ENCODE measurements at regions of chr7 and their contacts with region 1.

Region 1: DNA sequence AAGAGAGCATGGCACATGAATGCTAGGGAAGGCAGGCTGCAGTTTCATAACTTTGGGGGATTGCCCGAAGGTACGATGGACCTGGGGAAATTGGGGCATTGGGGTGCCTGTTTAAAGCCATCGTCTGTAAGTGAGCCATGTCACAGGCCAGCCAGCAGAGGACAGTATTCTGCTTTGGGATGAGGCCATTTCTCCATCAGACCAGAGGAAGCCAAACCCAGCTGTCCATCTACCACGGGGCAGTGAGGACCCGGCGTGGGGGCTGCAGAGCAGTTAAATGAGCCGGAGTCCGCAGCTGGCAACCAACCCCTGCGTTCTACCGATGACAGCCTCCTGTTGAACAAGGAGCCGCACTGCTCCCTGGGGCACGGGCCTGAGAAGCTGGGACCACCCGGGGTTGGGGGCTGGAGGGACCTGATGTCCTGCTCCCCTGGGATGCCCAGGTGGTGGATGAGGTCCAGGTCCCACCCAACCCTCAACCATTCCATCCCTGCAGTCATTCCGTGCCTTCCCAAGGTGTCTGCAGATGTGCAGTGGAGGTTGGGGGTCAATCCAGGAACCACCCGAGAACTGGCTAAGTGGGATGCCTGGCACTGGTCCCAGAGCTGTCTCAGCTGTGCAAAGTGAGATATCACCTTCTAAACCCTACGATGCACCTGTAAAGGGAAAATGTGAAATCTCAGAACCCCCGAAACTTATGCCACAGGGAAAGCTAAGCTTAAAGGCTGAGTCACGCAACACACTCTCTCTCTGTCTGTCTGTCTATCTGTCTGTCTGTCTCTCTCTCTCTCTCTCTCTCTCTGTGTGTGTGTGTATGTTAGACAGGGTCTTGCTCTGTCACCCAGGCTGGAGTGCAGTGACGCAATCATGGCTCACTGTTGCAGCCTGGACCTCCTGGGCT is 12.1 kb upstream of the RHBDD2 start:
- DNase-seq: peak; percentile 45
- H3K4me3 Mint-ChIP-seq: no peak overlapping the region
- H3K27ac Mint-ChIP-seq: no peak overlapping the region
- H3K4me1 Mint-ChIP-seq: peaks cover 8% of the 10 kb centered on the region
- H3K27me3 Mint-ChIP-seq: no peaks in the 10 kb centered on the region
- CTCF ChIP-seq: peak; percentile 67

Region 2: DNA sequence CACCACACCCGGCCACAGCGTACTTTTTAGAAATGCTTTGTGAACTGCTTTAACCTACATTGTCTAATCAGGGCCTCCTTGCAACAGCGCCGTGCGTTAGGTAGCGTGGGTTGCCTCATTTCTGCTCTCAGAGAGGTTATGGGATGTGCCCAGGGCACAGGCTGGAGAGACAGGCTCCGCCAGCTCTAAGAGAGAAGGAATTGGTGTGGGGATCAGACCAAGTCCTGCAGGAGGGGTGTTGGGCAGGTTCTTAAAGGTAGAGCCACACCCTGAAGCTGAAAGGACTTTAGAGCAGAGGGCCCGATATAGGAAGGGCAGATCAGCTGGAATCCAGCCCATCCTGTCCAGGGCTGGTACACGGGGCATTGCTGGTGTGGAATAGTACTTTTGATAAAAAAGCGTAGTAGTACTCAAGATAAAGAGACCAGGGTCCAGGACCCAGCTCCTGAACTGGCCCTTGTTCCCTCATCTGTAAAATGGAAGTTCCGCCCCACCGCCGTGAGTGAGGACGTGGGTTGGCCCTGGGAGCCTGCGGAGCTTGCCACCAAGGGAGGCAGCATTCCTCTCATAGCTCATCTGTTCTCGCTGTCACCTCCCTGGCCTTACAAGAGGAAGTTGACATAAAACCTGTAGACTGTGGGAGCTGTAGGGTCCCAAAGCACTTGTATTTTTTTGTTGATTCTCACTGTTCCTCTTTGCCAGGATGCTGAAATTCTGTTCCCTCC is 90.4 kb after region 1 on chr7:
- CTCF ChIA-PET with region 1: no interaction called
- intact Hi-C with region 1: loop called (anchors 5 kb)
- DNase-seq: peak; percentile 71
- H3K4me3 Mint-ChIP-seq: peak overlapping the region; percentile 55
- H3K27ac Mint-ChIP-seq: peak overlapping the region; percentile 76
- H3K4me1 Mint-ChIP-seq: peaks cover 19% of the 10 kb centered on the region
- H3K27me3 Mint-ChIP-seq: no peaks in the 10 kb centered on the region
- CTCF ChIP-seq: no peak

Region 3: GRCh38 chr7:76020031-76020714 is 153.4 kb after region 1 on chr7:
- CTCF ChIA-PET with region 1: interaction called, 22 read pairs
- intact Hi-C with region 1: loop called (anchors 1 kb)
- DNase-seq: peak; percentile 69
- H3K4me3 Mint-ChIP-seq: no peak overlapping the region
- H3K27ac Mint-ChIP-seq: no peak overlapping the region
- H3K4me1 Mint-ChIP-seq: no peaks in the 10 kb centered on the region
- H3K27me3 Mint-ChIP-seq: no peaks in the 10 kb centered on the region
- CTCF ChIP-seq: peak; percentile 64

Measured in Calu3 (cell line).